Activated CD4-positive, alpha-beta T cell treated with anti-CD3 and anti-CD28 coated beads for 36 hours (primary cell): ENCODE measurements at regions of chr5 and their contacts with region 1.

Region 1: DNA sequence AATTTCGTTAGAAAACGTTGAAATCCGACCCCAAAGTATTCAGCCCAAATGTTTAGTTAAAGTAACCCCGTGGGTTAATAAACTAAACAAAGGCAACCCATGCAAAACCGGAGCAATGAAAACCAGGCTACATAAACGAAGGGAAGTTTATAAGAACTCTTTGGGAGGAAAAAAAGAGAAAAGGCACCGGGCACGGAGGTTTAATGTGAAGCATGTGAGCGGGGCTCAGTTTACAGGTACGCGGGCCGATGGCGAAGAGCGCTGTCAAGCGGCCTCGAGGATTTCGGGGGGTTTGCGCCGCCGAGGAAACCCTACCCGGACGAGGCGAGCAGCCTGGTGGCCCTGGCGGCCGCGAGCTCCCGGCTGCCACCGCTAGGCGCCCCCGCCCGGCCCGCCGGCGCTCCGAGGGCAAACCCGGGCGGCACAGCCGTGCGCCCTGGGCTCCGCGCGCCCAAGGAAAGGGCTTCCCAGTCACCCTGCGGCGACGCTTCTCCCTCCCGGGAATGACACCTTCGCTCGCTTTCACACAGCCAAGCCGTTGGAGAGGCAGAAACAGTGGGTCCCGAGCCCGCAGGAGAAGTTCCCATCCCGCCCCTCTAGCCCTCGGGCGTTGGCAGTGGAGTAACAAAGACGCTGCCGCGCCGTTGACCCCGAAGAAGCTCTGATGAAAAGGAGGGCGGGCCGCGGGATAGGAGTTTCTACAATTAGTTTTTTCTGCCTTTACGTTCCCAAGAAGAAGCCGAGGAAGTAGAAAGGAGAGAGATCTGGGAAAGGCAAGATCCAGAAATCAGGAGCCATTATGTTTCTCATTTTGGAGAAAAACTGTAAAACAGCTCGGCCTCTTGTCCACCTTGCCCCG is 126.0 kb downstream of the TMEM174 start:
- DNase-seq: peak; percentile 47
- ATAC-seq: no peak
- H3K4me3 Mint-ChIP-seq: no peak overlapping the region
- H3K27ac Mint-ChIP-seq: no peak overlapping the region
- H3K4me1 Mint-ChIP-seq: peaks cover 18% of the 10 kb centered on the region
- H3K27me3 Mint-ChIP-seq: peaks cover 83% of the 10 kb centered on the region

Region 2: GRCh38 chr5:73215891-73216610 is 83.0 kb before region 1 on chr5:
- CTCF ChIA-PET with region 1: interaction called, 6 read pairs
- POLR2A ChIA-PET with region 1: no interaction called
- intact Hi-C with region 1: loop called (anchors 5 kb)
- DNase-seq: peak; percentile 84
- ATAC-seq: peak; percentile 82
- H3K4me3 Mint-ChIP-seq: no peak overlapping the region
- H3K27ac Mint-ChIP-seq: no peak overlapping the region
- H3K4me1 Mint-ChIP-seq: peaks cover 14% of the 10 kb centered on the region
- H3K27me3 Mint-ChIP-seq: peaks cover 76% of the 10 kb centered on the region

Region 3: GRCh38 chr5:73381590-73382400 is 82.8 kb after region 1 on chr5:
- CTCF ChIA-PET with region 1: interaction called, 3 read pairs
- POLR2A ChIA-PET with region 1: no interaction called
- intact Hi-C with region 1: loop called (anchors 2 kb)
- DNase-seq: peak; percentile 28
- ATAC-seq: no peak
- H3K4me3 Mint-ChIP-seq: no peak overlapping the region
- H3K27ac Mint-ChIP-seq: no peak overlapping the region
- H3K4me1 Mint-ChIP-seq: peaks cover 15% of the 10 kb centered on the region
- H3K27me3 Mint-ChIP-seq: peaks cover 66% of the 10 kb centered on the region